Activated B cell treated with CpG ODN at 0.5 μM for 24 hours (primary cell): ENCODE measurements at regions of chr6 and their contacts with region 1.

Region 1: GRCh38 chr6:131909408-131910218 is 41.6 kb downstream of the CCN2 start:
- DNase-seq: peak; percentile 36
- ATAC-seq: peak; percentile 96
- H3K4me3 Mint-ChIP-seq: no peak overlapping the region
- H3K27ac Mint-ChIP-seq: no peak overlapping the region
- H3K4me1 Mint-ChIP-seq: peaks cover 7% of the 10 kb centered on the region
- H3K27me3 Mint-ChIP-seq: peaks cover 23% of the 10 kb centered on the region
- CTCF ChIP-seq: peak; percentile 95

Region 2: GRCh38 chr6:131519670-131520436 is 389.8 kb before region 1 on chr6:
- CTCF ChIA-PET with region 1: no interaction called
- POLR2A ChIA-PET with region 1: no interaction called
- intact Hi-C with region 1: loop called (anchors 1 kb)
- DNase-seq: no peak
- ATAC-seq: peak; percentile 45
- H3K4me3 Mint-ChIP-seq: no peak overlapping the region
- H3K27ac Mint-ChIP-seq: no peak overlapping the region
- H3K4me1 Mint-ChIP-seq: no peaks in the 10 kb centered on the region
- H3K27me3 Mint-ChIP-seq: peaks cover 8% of the 10 kb centered on the region
- CTCF ChIP-seq: no peak

Region 3: GRCh38 chr6:131642987-131643611 is 266.5 kb before region 1 on chr6:
- CTCF ChIA-PET with region 1: no interaction called
- POLR2A ChIA-PET with region 1: no interaction called
- intact Hi-C with region 1: no loop called
- DNase-seq: no peak
- ATAC-seq: no peak
- H3K4me3 Mint-ChIP-seq: no peak overlapping the region
- H3K27ac Mint-ChIP-seq: no peak overlapping the region
- H3K4me1 Mint-ChIP-seq: no peaks in the 10 kb centered on the region
- H3K27me3 Mint-ChIP-seq: peaks cover 4% of the 10 kb centered on the region
- CTCF ChIP-seq: no peak

Region 4: GRCh38 chr6:131694831-131695426 is 214.7 kb before region 1 on chr6:
- CTCF ChIA-PET with region 1: interaction called, 102 read pairs
- POLR2A ChIA-PET with region 1: interaction called, 7 read pairs
- intact Hi-C with region 1: loop called (anchors 1 kb)
- DNase-seq: no peak
- ATAC-seq: peak; percentile 97
- H3K4me3 Mint-ChIP-seq: no peak overlapping the region
- H3K27ac Mint-ChIP-seq: no peak overlapping the region
- H3K4me1 Mint-ChIP-seq: peaks cover 23% of the 10 kb centered on the region
- H3K27me3 Mint-ChIP-seq: no peaks in the 10 kb centered on the region
- CTCF ChIP-seq: no peak

Region 5: DNA sequence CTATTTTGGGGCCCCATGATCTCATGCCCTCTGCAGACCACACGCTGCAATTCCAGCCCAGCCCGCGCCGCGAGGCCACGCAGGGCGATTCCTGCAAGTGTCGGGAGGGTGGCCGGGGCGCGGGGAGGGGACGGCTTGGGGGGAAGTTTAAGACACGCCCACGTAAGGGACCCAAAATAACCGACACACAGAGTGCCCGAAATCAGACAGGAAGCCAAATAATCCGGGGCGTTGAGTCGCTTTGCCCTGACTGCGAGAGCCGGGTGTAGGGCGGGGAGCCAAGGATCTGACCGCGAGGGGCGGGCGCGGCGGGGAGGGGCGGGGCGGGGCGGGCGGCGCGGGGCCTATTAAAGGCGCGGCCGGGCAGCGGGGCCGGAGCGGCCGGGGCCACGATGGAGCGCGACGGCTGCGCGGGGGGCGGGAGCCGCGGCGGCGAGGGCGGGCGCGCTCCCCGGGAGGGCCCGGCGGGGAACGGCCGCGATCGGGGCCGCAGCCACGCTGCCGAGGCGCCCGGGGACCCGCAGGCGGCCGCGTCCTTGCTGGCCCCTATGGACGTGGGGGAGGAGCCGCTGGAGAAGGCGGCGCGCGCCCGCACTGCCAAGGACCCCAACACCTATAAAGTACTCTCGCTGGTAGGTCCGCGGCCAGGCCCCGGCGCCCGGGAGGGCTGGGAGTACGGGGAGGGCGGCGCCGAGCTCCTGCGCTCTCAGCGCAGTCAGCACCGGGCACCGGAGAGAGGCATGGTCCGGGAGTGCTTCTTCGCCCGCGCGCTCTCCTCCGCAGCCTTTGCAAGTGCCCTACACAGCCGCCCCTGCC is 101.8 kb before region 1 on chr6 and contains the start of gene ENPP1:
- CTCF ChIA-PET with region 1: no interaction called
- POLR2A ChIA-PET with region 1: no interaction called
- intact Hi-C with region 1: loop called (anchors 5 kb)
- DNase-seq: peak; percentile 45
- ATAC-seq: peak; percentile 79
- H3K4me3 Mint-ChIP-seq: peak within 1 kb of the TSS; percentile 90
- H3K27ac Mint-ChIP-seq: peak within 1 kb of the TSS; percentile 42
- H3K4me1 Mint-ChIP-seq: peaks cover 16% of the 10 kb centered on the region
- H3K27me3 Mint-ChIP-seq: peaks cover 32% of the 10 kb centered on the region
- CTCF ChIP-seq: no peak
- total RNA-seq, gene ENPP1: 0.27 and 1.3 TPM in 2 replicates